Activated B cell treated with CpG ODN at 0.5 μM for 24 hours (primary cell): ENCODE measurements at regions of chr10 and their contacts with region 1.

Region 1: GRCh38 chr10:132446661-132447194 is 49.7 kb downstream of the PWWP2B start:
- DNase-seq: peak; percentile 48
- ATAC-seq: peak; percentile 65
- H3K4me3 Mint-ChIP-seq: no peak overlapping the region
- H3K27ac Mint-ChIP-seq: peak overlapping the region; percentile 96
- H3K4me1 Mint-ChIP-seq: peaks cover 48% of the 10 kb centered on the region
- H3K27me3 Mint-ChIP-seq: no peaks in the 10 kb centered on the region
- CTCF ChIP-seq: no peak

Region 2: DNA sequence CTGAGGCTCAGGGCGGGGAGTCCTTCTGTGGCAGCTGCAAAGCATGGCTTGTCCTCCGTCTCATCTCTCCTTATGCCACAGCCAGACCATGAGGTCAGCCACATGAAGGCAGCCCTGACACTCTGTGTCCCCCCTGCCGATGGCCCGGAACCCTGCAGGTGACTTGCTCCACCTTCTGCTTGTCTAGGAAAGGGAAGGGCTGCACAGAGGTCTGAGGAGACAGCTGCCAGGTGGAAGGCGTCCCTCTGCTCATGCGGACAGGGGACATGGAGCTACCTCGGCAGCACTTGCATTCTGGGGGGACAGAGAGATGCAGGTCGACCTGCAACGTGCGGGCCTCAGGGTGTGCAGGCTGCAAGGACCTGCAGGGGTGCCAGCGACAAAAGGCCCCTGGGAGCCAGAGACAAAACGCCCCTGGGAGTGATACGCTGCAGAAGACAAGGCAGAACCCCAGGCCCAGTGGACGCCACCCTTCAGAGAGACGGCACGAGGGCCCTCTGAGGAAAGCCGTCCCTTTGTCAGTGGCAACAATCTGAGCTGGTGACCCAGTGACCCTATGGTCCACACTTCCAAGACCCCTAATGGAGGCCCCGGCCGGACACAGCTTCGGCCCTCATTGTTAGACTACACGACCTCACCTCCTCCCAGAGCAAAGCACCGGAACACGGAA is 751.1 kb before region 1 on chr10:
- CTCF ChIA-PET with region 1: no interaction called
- POLR2A ChIA-PET with region 1: no interaction called
- intact Hi-C with region 1: no loop called
- DNase-seq: no peak
- ATAC-seq: no peak
- H3K4me3 Mint-ChIP-seq: no peak overlapping the region
- H3K27ac Mint-ChIP-seq: no peak overlapping the region
- H3K4me1 Mint-ChIP-seq: no peaks in the 10 kb centered on the region
- H3K27me3 Mint-ChIP-seq: peaks cover under 1% of the 10 kb centered on the region
- CTCF ChIP-seq: no peak

Region 3: DNA sequence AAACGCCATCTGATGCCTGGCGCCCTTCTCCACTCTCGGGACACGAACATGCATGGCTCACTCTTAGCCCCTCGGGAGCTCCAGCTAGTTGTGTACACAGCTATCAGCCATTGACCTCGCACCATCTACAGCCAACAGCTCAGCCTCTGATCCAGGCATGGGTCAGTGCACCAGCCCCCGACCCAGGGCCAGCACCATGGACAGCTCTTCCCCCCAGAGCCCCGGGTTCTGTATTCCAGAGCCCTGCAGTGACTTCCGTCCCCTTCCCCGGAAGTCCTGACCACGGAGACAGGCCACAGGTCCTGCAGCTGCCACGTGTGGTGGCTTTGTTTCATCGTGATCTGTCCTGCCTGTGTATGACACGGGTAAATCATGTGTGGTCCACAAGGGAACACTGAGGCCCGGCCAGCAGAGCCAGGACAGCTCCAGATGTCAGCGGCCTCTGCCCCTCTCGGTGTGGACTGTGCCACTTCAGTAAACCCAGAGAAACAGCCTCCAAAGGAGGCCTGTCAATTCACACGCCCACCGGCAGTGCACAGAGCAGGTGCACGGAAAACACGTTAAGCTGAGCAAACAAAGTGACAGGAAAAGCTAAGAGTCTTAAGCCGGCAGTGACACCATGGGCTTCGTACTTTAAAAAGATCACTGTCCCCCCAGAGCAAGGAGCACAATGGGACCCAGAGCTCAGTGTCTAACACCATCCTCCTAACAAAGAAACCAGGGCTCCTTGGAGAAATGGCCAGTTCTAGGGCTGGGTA is 152.0 kb before region 1 on chr10:
- CTCF ChIA-PET with region 1: no interaction called
- POLR2A ChIA-PET with region 1: no interaction called
- intact Hi-C with region 1: no loop called
- DNase-seq: no peak
- ATAC-seq: no peak
- H3K4me3 Mint-ChIP-seq: no peak overlapping the region
- H3K27ac Mint-ChIP-seq: no peak overlapping the region
- H3K4me1 Mint-ChIP-seq: peaks cover 9% of the 10 kb centered on the region
- H3K27me3 Mint-ChIP-seq: peaks cover 7% of the 10 kb centered on the region
- CTCF ChIP-seq: no peak

Region 4: GRCh38 chr10:132387764-132388210 is 58.9 kb before region 1 on chr10:
- CTCF ChIA-PET with region 1: interaction called, 5 read pairs
- POLR2A ChIA-PET with region 1: interaction called, 7 read pairs
- intact Hi-C with region 1: loop called (anchors 1 kb)
- DNase-seq: peak; percentile 83
- ATAC-seq: peak; percentile 98
- H3K4me3 Mint-ChIP-seq: peak overlapping the region; percentile 80
- H3K27ac Mint-ChIP-seq: peak overlapping the region; percentile 85
- H3K4me1 Mint-ChIP-seq: peaks cover 7% of the 10 kb centered on the region
- H3K27me3 Mint-ChIP-seq: no peaks in the 10 kb centered on the region
- CTCF ChIP-seq: no peak

Region 5: DNA sequence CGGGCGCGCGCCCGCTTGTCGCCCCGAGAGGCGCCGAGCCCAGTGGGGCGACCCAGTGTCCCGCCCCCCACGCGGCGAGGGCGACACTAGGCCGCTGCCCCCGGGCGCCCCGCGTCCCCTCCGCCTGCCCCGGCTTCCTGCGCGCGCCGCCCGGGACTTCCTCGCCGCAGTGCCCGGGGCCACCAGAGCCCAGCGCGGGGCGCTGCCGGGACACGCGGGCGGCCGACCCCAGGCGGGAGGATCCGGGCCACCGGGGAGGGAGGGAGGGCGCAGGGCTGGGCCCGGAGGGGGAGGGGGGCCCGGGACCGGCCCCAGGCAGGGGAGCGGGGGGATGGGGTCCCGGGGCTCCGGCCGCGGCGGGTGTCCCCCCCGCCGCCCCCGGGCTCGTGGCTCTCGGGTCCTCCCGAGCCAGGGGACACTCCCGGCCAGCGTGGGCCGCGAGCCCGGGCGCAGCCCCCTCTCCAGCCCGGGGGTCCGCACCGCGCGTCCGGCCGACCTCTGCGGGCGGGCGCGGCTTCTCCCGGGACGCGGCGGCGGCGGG is 50.2 kb before region 1 on chr10:
- CTCF ChIA-PET with region 1: interaction called, 9 read pairs
- POLR2A ChIA-PET with region 1: interaction called, 18 read pairs
- intact Hi-C with region 1: loop called (anchors 1 kb)
- DNase-seq: peak; percentile 74
- ATAC-seq: peak; percentile 71
- H3K4me3 Mint-ChIP-seq: no peak overlapping the region
- H3K27ac Mint-ChIP-seq: no peak overlapping the region
- H3K4me1 Mint-ChIP-seq: peaks cover 59% of the 10 kb centered on the region
- H3K27me3 Mint-ChIP-seq: no peaks in the 10 kb centered on the region
- CTCF ChIP-seq: no peak

Region 6: GRCh38 chr10:132434405-132435005 is 12.2 kb before region 1 on chr10:
- CTCF ChIA-PET with region 1: interaction called, 5 read pairs
- POLR2A ChIA-PET with region 1: interaction called, 5 read pairs
- intact Hi-C with region 1: loop called (anchors 1 kb)
- DNase-seq: no peak
- ATAC-seq: peak; percentile 87
- H3K4me3 Mint-ChIP-seq: peak overlapping the region; percentile 69
- H3K27ac Mint-ChIP-seq: peak overlapping the region; percentile 41
- H3K4me1 Mint-ChIP-seq: peaks cover 21% of the 10 kb centered on the region
- H3K27me3 Mint-ChIP-seq: no peaks in the 10 kb centered on the region
- CTCF ChIP-seq: no peak

Region 7: GRCh38 chr10:132489087-132489703 is 42.5 kb after region 1 on chr10:
- CTCF ChIA-PET with region 1: no interaction called
- POLR2A ChIA-PET with region 1: no interaction called
- intact Hi-C with region 1: no loop called
- DNase-seq: no peak
- ATAC-seq: no peak
- H3K4me3 Mint-ChIP-seq: no peak overlapping the region
- H3K27ac Mint-ChIP-seq: no peak overlapping the region
- H3K4me1 Mint-ChIP-seq: no peaks in the 10 kb centered on the region
- H3K27me3 Mint-ChIP-seq: no peaks in the 10 kb centered on the region
- CTCF ChIP-seq: no peak